GM12878 (cell line): ENCODE measurements at regions of chr12 and their contacts with region 1.

Region 1: GRCh38 chr12:31779786-31780495 is 51.1 kb upstream of the AMN1 start:
- DNase-seq: no peak
- ATAC-seq: no peak
- H3K4me3 ChIP-seq: no peak overlapping the region
- H3K27ac ChIP-seq: no peak overlapping the region
- H3K4me1 ChIP-seq: no peaks in the 10 kb centered on the region
- H3K27me3 ChIP-seq: no peaks in the 10 kb centered on the region
- CTCF ChIP-seq: no peak
- EP300 ChIP-seq: no peak
- POLR2A ChIP-seq: no peak
- RAD21 ChIP-seq: no peak

Region 2: DNA sequence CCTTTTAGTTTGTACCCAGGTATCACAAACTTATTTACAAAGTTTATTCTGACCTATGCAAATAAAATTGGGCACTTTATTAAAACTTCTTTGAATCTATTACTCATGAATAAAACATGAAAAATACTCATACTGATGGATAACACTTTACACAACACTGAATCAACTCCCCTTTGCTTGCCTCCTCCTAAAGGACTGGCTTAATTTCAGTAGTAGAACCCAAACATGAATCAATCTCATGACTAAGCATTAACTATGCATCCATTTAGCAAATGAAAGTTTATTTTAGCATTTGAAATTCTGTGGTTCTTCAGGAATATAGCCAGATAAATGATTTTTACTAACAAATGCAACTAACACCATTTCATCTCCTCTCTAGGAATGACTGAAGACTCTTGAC is 221.4 kb before region 1 on chr12:
- CTCF ChIA-PET with region 1: no interaction called
- POLR2A ChIA-PET with region 1: no interaction called
- RAD21 ChIA-PET with region 1: no interaction called
- SMC1A ChIA-PET with region 1: no interaction called
- in situ Hi-C with region 1: no loop called
- intact Hi-C with region 1: no loop called
- DNase-seq: no peak
- ATAC-seq: no peak
- H3K4me3 ChIP-seq: no peak overlapping the region
- H3K27ac ChIP-seq: no peak overlapping the region
- H3K4me1 ChIP-seq: peaks cover 11% of the 10 kb centered on the region
- H3K27me3 ChIP-seq: no peaks in the 10 kb centered on the region
- CTCF ChIP-seq: no peak
- EP300 ChIP-seq: no peak
- POLR2A ChIP-seq: no peak
- RAD21 ChIP-seq: no peak

Region 3: DNA sequence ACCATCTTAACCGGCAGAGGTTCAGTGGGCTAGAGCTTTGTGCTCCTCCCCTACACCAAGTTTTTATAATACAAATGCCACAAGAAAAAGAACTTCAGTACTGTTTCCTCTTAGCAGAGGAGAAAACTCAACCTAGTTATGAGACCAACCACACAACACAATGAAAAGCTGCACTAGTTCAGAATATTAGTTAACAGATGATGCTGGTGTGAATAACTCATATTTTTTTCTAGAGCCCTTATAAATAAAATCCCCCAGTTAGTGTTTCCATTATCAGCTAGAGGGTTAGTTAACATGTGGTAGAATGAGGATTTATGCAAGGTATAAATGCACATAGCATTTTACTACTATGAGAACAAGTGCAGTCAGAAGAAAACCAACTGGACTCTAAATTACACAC is 10.8 kb after region 1 on chr12:
- CTCF ChIA-PET with region 1: interaction called, 4 read pairs
- POLR2A ChIA-PET with region 1: interaction called, 4 read pairs
- RAD21 ChIA-PET with region 1: no interaction called
- SMC1A ChIA-PET with region 1: interaction called, 19 read pairs
- in situ Hi-C with region 1: no loop called
- intact Hi-C with region 1: no loop called
- DNase-seq: no peak
- ATAC-seq: no peak
- H3K4me3 ChIP-seq: no peak overlapping the region
- H3K27ac ChIP-seq: no peak overlapping the region
- H3K4me1 ChIP-seq: no peaks in the 10 kb centered on the region
- H3K27me3 ChIP-seq: no peaks in the 10 kb centered on the region
- CTCF ChIP-seq: no peak
- EP300 ChIP-seq: no peak
- POLR2A ChIP-seq: no peak
- RAD21 ChIP-seq: no peak

Region 4: GRCh38 chr12:32644431-32644830 is 864.5 kb after region 1 on chr12:
- CTCF ChIA-PET with region 1: no interaction called
- POLR2A ChIA-PET with region 1: no interaction called
- RAD21 ChIA-PET with region 1: no interaction called
- SMC1A ChIA-PET with region 1: no interaction called
- in situ Hi-C with region 1: no loop called
- intact Hi-C with region 1: no loop called
- DNase-seq: no peak
- ATAC-seq: no peak
- H3K4me3 ChIP-seq: no peak overlapping the region
- H3K27ac ChIP-seq: no peak overlapping the region
- H3K4me1 ChIP-seq: no peaks in the 10 kb centered on the region
- H3K27me3 ChIP-seq: no peaks in the 10 kb centered on the region
- CTCF ChIP-seq: no peak
- EP300 ChIP-seq: no peak
- POLR2A ChIP-seq: no peak
- RAD21 ChIP-seq: no peak